PC-9 (cell line): ENCODE measurements at regions of chr5 and their contacts with region 1.

Region 1: GRCh38 chr5:86118542-86118941 is 499.2 kb upstream of the COX7C start:
- DNase-seq: no peak
- H3K4me3 ChIP-seq: no peak overlapping the region
- H3K27ac ChIP-seq: no peak overlapping the region
- H3K4me1 ChIP-seq: no peaks in the 10 kb centered on the region
- H3K27me3 ChIP-seq: no peaks in the 10 kb centered on the region
- CTCF ChIP-seq: peak; percentile 41

Region 2: DNA sequence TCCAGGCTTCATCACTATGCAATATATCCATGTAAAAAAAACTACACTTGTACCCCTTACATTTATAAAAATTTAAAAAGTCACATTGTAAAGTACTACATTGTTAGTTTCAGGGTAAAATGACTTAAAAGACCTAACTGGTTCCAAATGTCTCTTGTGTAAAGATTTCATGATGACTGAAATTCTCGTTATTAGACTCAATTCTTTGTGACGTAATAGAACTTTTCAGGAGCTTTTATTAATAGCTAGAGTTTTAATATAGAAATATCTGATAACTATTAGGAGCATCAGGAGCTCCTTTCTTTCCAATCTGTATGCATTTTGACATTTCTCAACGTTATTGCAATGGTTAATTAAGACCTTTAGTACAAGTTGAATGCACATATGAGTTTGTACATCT is 57.5 kb after region 1 on chr5:
- CTCF ChIA-PET with region 1: no interaction called
- POLR2A ChIA-PET with region 1: interaction called, 10 read pairs
- intact Hi-C with region 1: no loop called
- DNase-seq: no peak
- H3K4me3 ChIP-seq: no peak overlapping the region
- H3K27ac ChIP-seq: no peak overlapping the region
- H3K4me1 ChIP-seq: no peaks in the 10 kb centered on the region
- H3K27me3 ChIP-seq: no peaks in the 10 kb centered on the region
- CTCF ChIP-seq: no peak